Activated T-helper 1 cell treated with anti-CD3 and anti-CD28 coated beads, Interleukin-12 subunit alpha, Interleukin-12 subunit beta, Interleukin-2, Interleukin-4 antibody, amounts not matched to agents 30 ng/mL and 10 ng/mL and 1 ng/mL, durations not matched to agents 14 hours and 24 hours and 36 hours (primary cell): ENCODE measurements at regions of chr10 and their contacts with region 1.

Region 1: GRCh38 chr10:35218339-35218955 is 91.8 kb downstream of the CREM start:
- DNase-seq: peak; percentile 73
- H3K4me3 Mint-ChIP-seq: peak overlapping the region; percentile 74
- H3K27ac Mint-ChIP-seq: peak overlapping the region; percentile 95
- H3K4me1 Mint-ChIP-seq: peaks cover 61% of the 10 kb centered on the region
- H3K27me3 Mint-ChIP-seq: no peaks in the 10 kb centered on the region

Region 2: DNA sequence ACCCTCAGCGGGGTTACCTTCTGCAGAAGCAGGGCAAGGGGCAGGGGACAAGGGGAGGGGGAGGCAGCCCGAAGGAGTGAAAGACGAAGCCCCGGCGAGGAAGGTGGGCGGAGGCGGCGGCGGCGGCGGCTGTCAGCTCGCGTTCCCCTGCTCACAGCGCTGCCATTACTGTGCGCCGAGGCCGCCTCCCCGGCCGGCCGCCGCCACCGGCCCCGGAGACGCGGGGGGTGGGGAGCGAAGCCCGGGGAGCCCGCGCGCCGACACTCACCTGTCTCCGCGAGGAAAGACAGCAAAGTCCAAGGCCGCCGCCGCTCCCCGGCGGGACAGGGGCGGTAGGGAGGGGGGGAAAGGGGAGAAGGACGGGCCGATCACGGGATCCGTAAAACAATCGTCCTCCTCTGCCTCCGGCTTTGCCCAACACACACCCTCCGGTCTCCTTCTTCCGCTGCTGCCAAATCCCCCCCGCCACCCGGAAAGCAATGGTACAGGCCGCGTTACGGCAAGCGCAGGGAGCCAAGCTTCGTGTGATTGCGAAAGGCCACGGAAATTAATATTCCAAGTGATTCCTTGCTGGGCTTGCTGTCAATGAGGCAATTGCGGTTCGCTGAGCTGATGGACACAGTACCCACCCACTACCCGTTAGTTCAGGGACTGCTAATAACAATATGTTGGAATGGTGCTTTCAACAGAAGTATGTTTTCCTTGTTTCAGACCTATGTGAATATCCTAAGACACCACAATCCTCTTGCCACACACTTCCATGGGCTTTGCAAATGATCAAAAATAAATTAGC is 128.1 kb before region 1 on chr10 and contains the start of gene CUL2:
- intact Hi-C with region 1: loop called (anchors 1 kb)
- DNase-seq: peak; percentile 90
- H3K4me3 Mint-ChIP-seq: peak within 1 kb of the TSS; percentile 98
- H3K27ac Mint-ChIP-seq: peak within 1 kb of the TSS; percentile 99
- H3K4me1 Mint-ChIP-seq: peaks cover 38% of the 10 kb centered on the region
- H3K27me3 Mint-ChIP-seq: peaks cover 9% of the 10 kb centered on the region
- total RNA-seq, gene CUL2: 49.8 and 50.5 TPM in 2 replicates

Region 3: DNA sequence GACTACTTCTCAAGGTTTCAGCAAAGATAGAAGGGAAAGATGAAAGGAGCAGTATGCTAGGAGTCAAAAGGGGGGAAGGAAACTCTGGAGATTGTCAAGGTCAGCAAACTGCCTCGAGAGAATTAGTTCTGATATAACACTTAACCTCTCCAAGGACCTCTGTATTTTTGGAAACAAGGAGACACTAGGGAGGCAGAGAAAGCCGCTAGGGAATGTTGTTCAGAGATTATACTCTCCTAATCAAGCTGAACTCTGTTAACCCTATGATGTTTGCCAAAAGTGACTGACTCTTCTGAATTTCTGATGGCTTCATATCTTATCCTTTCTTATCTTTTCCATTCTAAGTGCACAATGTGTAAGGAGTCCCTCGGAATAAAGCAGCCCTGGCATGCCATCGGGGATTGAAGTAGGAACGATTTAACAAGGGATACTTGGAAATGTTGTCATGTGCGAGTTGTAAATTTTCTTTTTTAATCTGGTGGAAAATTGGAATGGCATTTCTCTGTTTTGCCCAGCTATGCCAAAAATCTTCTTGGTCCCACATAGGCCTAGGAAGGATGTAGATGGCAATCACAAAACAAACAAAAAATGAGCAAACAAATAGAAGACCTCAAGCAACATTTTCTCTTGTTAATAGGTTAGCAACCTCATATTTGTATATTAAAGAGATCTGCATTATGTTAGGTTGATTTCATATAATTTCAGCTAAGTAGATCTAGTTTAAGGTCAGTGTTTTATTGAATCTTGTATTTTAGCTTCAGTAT is 64.5 kb before region 1 on chr10:
- intact Hi-C with region 1: loop called (anchors 1 kb)
- DNase-seq: no peak
- H3K4me3 Mint-ChIP-seq: no peak overlapping the region
- H3K27ac Mint-ChIP-seq: no peak overlapping the region
- H3K4me1 Mint-ChIP-seq: peaks cover 44% of the 10 kb centered on the region
- H3K27me3 Mint-ChIP-seq: no peaks in the 10 kb centered on the region

Region 4: GRCh38 chr10:35185260-35186034 is 33.0 kb before region 1 on chr10:
- intact Hi-C with region 1: no loop called
- DNase-seq: no peak
- H3K4me3 Mint-ChIP-seq: no peak overlapping the region
- H3K27ac Mint-ChIP-seq: no peak overlapping the region
- H3K4me1 Mint-ChIP-seq: no peaks in the 10 kb centered on the region
- H3K27me3 Mint-ChIP-seq: no peaks in the 10 kb centered on the region